ENCODE measurements at regions of chr10 and their contacts with region 1.

Region 1: DNA sequence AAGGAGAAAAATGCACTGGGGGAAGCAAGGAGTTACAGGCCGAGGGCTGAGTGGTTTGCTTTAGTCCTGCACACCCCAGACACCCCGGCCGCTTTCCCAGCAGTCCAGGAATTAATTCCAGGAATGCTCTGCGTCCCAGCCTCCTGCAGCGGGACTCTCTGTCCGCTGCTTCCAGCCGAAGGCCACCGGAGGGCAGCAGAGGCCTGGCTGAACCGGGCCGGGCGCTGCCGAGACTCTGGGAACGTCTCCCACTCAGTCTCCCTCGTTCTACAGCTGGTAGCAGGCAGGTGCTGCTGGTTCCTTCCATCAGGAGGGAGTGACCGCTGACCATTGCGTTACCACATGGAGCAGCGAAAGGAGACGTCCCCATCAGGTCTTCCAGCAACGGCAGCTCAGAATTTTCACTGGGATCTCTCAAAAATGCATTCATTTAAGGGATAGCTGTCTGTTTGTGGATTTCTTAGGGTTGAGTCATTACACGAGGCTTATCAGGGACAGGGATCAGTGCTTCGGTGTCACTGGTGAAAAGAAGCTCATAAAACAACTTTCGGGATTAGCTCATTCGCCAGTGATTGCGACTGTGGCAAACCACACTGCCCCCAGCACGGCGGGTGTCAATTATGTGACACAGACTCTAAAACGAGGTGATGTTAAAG is 24.9 kb upstream of the PITRM1 start:
- DNase-seq: peak; percentile 76
- H3K4me3 Mint-ChIP-seq: peak overlapping the region; percentile 37
- H3K27ac Mint-ChIP-seq: peak overlapping the region; percentile 57
- H3K4me1 Mint-ChIP-seq: peaks cover 24% of the 10 kb centered on the region
- H3K27me3 Mint-ChIP-seq: peaks cover 82% of the 10 kb centered on the region

Region 2: DNA sequence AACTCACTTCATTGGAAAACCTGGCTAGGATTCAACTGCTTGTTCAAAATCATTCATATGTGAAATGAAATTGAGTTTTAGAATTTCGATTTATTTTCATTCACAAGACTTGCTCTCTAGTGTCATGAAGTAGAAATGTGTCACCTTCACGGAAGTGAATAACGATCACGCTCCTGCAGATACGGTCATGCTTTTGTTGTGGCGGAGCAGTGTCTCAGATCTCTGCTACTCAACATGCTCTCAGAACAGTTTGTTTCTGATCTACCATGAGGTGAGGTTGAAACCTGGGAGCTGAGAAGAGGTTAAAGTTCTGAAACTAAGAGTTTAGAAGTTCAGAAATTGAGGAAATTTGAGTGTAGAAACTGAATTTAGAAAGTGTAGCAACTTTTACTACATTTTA is 11.1 kb before region 1 on chr10:
- intact Hi-C with region 1: loop called (anchors 1 kb)
- DNase-seq: peak; percentile 20
- H3K4me3 Mint-ChIP-seq: peak overlapping the region; percentile 3
- H3K27ac Mint-ChIP-seq: no peak overlapping the region
- H3K4me1 Mint-ChIP-seq: peaks cover 15% of the 10 kb centered on the region
- H3K27me3 Mint-ChIP-seq: peaks cover 76% of the 10 kb centered on the region

Region 3: GRCh38 chr10:3239066-3239919 is 41.8 kb after region 1 on chr10:
- intact Hi-C with region 1: no loop called
- DNase-seq: peak; percentile 54
- H3K4me3 Mint-ChIP-seq: no peak overlapping the region
- H3K27ac Mint-ChIP-seq: no peak overlapping the region
- H3K4me1 Mint-ChIP-seq: no peaks in the 10 kb centered on the region
- H3K27me3 Mint-ChIP-seq: peaks cover 48% of the 10 kb centered on the region

Region 4: DNA sequence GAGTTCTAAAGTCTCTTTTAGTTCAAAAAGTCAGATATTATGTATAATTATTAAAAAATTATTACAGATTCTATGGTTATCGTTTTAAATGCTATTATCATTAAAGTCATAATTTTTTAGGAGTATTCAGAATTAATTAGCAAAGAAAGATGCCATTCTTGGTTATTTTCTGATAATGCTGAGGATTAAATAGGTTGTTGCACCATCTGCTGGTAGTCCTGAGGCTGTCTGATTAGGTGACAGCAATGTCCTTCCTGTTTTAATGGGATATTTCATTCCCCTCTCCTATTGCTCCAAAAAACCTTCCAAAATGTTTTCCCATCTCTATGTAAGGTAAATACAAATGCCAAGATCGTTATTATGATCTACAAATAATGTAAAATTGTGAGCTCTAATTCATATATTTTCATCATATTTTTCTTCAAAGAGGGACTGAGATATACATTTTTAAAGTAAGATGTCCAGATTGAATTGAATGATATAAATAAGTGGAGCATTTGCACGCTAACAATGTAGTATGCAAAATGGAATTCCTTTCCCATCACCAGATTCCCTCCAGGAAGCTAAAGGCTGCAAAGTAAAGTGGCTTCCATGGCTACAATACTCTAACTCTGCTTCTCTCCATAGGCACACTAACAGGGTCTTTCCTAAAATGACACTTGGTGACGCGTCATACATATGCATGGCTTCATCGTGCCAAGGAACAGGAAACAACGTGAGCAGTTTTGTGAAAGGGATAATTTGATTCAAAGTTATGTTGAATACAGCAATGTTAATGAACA is 1569.7 kb after region 1 on chr10:
- intact Hi-C with region 1: loop called (anchors 1 kb)
- DNase-seq: no peak
- H3K4me3 Mint-ChIP-seq: no peak overlapping the region
- H3K27ac Mint-ChIP-seq: no peak overlapping the region
- H3K4me1 Mint-ChIP-seq: no peaks in the 10 kb centered on the region
- H3K27me3 Mint-ChIP-seq: peaks cover 24% of the 10 kb centered on the region